Gastrocnemius medialis (tissue), 4 donors: ENCODE measurements at regions of chr10 and their contacts with region 1.

Region 1: DNA sequence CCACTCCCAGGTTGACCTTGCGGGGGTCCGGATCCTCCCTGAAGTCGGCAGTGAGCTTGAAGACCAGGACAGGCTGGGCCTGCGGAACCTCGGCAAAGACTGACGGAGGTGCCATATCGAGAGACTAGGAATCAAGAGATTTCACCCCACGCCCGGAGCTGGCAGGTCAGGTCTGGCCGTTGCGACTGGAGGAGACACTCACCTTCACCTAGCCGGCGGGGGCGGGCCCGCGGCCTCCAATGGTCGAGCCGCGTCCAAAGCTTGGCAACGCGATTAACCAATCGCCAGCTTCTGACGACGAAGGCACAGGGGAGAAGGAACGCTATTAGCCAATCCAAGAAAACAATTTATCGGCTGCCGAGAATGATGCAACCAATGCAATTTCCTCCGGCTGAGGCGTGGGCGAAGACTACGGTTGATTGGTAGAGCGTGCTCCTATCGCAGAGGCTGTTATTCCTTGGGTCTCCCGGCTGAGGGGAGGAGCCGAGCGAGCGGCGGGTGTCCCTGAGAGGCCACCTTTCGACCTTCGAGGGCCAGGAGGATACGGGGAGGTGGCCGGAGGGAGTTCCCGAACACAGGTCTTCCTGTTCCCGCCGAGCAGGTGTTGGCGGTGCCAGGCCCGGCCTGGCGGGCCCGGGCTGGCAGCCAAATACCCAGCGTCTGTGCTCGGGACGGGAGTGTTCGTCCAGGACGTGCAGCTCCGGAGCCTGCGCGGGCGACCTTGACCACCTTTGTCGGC is at the start of gene GOT1:
- DNase-seq: peak; percentile 97 to 99
- ATAC-seq: peak; percentile 92 to 97
- H3K4me3 ChIP-seq: peak within 1 kb of the TSS; percentile 81 to 97 (median 94)
- H3K27ac ChIP-seq: peak within 1 kb of the TSS; percentile 96 to 99 (median 98)
- H3K4me1 ChIP-seq: peaks cover 74 to 76% of the 10 kb centered on the region in 2 donors
- H3K27me3 ChIP-seq: no peaks in the 10 kb centered on the region
- CTCF ChIP-seq: peak in 1 of 5 experiments; percentile 10
- POLR2A ChIP-seq: peak; percentile 89 to 93
- total RNA-seq, gene GOT1: 91.4 to 215 (median 135) TPM

Region 2: GRCh38 chr10:97498076-97498840 is 1932.4 kb before region 1 on chr10 and contains the start of gene MMS19:
- in situ Hi-C with region 1: no loop called
- intact Hi-C with region 1: loop called (anchors 5 kb)
- DNase-seq: peak; percentile 98 to 99
- ATAC-seq: peak; percentile 84 to 86
- H3K4me3 ChIP-seq: peak within 1 kb of the TSS; percentile 75 to 100 (median 88)
- H3K27ac ChIP-seq: peak within 1 kb of the TSS; percentile 94 to 100 (median 96)
- H3K4me1 ChIP-seq: peaks cover 49 to 53% of the 10 kb centered on the region in 2 donors
- H3K27me3 ChIP-seq: no peaks in the 10 kb centered on the region
- CTCF ChIP-seq: peak in 2 of 5 experiments; percentile 19 to 32
- POLR2A ChIP-seq: peak; percentile 75 to 79
- total RNA-seq, gene MMS19: 56.1 to 70.0 (median 65.0) TPM

Region 3: GRCh38 chr10:99593312-99593711 is 162.7 kb after region 1 on chr10:
- in situ Hi-C with region 1: no loop called
- intact Hi-C with region 1: no loop called
- DNase-seq: no peak
- ATAC-seq: no peak
- H3K4me3 ChIP-seq: no peak overlapping the region
- H3K27ac ChIP-seq: no peak overlapping the region
- H3K4me1 ChIP-seq: peaks cover 9 to 10% of the 10 kb centered on the region in 2 donors
- H3K27me3 ChIP-seq: no peaks in the 10 kb centered on the region
- CTCF ChIP-seq: no peak
- POLR2A ChIP-seq: no peak

Region 4: GRCh38 chr10:99620713-99621453 is 190.3 kb after region 1 on chr10:
- in situ Hi-C with region 1: loop called in 3 of 4 experiments (anchors 5 to 10 kb)
- intact Hi-C with region 1: loop called (anchors 1 kb)
- DNase-seq: peak; percentile 86 to 91
- ATAC-seq: peak; percentile 70 to 89
- H3K4me3 ChIP-seq: peak overlapping the region; percentile 71 to 81 (median 75)
- H3K27ac ChIP-seq: peak overlapping the region; percentile 91 to 97 (median 96)
- H3K4me1 ChIP-seq: peaks cover 37 to 39% of the 10 kb centered on the region in 2 donors
- H3K27me3 ChIP-seq: no peaks in the 10 kb centered on the region
- CTCF ChIP-seq: peak in 3 of 5 experiments; percentile 18 to 20 (median 19)
- POLR2A ChIP-seq: peak; percentile 54 to 89

Region 5: GRCh38 chr10:99732033-99732912 is 301.7 kb after region 1 on chr10 and contains the starts of genes COX15 and CUTC:
- in situ Hi-C with region 1: loop called in 1 of 4 experiments (anchors 10 kb)
- intact Hi-C with region 1: loop called (anchors 2 kb)
- DNase-seq: peak; percentile 96 to 98
- ATAC-seq: peak; percentile 82 to 83
- H3K4me3 ChIP-seq: peak within 1 kb of the TSS; percentile 82 to 100 (median 97)
- H3K27ac ChIP-seq: peak within 1 kb of the TSS; percentile 95 to 99 (median 99)
- H3K4me1 ChIP-seq: peaks cover 53 to 54% of the 10 kb centered on the region in 2 donors
- H3K27me3 ChIP-seq: no peaks in the 10 kb centered on the region
- CTCF ChIP-seq: peak; percentile 43 to 66 (median 51)
- POLR2A ChIP-seq: peak; percentile 93 to 94
- total RNA-seq, gene COX15: 28.1 to 45.3 (median 32.5) TPM
- total RNA-seq, gene CUTC: 85.2 to 172 (median 126) TPM

Region 6: DNA sequence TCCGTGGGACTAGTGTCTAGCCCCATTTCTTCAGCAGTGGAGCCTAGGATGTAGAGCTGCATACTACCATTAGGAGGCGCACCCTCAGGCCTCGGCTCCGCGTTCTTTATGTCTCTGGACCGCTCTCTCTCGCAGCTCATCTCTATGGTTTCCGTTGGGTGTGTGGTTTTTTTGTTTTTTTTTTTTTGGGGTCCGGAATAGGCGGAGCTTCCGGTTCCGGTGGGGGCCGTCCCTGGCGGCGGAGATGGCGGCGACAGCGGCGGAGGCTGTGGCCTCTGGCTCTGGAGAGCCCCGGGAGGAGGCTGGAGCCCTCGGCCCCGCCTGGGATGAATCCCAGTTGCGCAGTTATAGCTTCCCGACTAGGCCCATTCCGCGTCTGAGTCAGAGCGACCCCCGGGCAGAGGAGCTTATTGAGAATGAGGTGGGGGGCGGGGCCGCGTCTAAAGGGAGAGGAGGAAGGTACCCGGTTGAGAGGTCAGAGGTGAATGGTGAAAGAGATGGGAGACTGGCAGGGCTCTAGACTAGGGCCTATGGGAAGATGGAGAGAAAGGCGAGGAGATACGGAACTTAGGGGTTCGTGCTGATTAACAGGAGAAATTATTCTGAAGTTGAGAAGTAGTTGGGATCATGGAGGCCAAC is 1105.2 kb after region 1 on chr10 and contains the start of gene HIF1AN:
- in situ Hi-C with region 1: no loop called
- intact Hi-C with region 1: loop called (anchors 5 kb)
- DNase-seq: peak; percentile 81 to 91
- ATAC-seq: peak; percentile 97 to 98
- H3K4me3 ChIP-seq: peak within 1 kb of the TSS; percentile 71 to 99 (median 88)
- H3K27ac ChIP-seq: peak within 1 kb of the TSS; percentile 76 to 86 (median 82)
- H3K4me1 ChIP-seq: peaks cover 20 to 31% of the 10 kb centered on the region in 2 donors
- H3K27me3 ChIP-seq: no peaks in the 10 kb centered on the region
- CTCF ChIP-seq: peak; percentile 71 to 96 (median 83)
- POLR2A ChIP-seq: peak; percentile 67 to 81
- total RNA-seq, gene HIF1AN: 21.6 to 25.7 (median 24.0) TPM

Region 7: DNA sequence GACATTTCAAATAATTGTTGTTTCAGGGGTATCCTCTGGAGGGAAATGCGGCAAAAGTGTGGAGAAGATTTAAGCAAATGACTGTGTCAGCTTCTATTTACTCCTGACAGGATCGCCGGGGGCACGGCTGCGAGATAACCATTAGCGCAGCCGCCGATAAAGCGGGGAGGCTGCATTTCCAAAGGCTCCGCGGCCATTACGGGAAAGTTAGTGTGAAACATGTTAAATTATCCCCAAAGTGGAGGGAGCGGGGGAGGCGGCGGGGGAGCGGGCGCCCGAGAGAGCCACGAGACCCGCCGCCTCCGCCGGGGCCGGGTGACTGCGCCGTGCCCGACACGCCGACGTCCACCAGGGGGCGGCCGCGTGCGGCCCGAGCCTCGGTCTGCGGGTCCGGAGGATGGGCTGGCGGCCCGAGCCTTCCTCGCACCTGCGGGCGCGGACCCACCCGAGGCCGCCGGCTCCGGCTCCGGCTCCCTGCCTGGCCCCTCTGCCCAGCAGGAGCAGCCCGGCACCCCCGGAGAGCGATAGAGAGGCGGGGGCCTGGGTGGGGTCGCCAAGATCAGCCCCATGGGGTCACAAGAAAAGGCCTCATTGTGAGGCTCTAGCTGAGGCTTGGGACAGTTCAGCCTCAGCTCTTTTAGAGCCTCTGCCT is 1240.3 kb after region 1 on chr10:
- in situ Hi-C with region 1: no loop called
- intact Hi-C with region 1: no loop called
- DNase-seq: no peak
- ATAC-seq: no peak
- H3K4me3 ChIP-seq: no peak overlapping the region
- H3K27ac ChIP-seq: no peak overlapping the region
- H3K4me1 ChIP-seq: no peaks in the 10 kb centered on the region
- H3K27me3 ChIP-seq: peaks cover 69 to 77% (median 73%) of the 10 kb centered on the region in 3 donors
- CTCF ChIP-seq: peak in 4 of 5 experiments; percentile 34 to 69 (median 60)
- POLR2A ChIP-seq: no peak